Activated CD8-positive, alpha-beta T cell treated with anti-CD3 and anti-CD28 coated beads for 36 hours (primary cell): ENCODE measurements at regions of chr5 and their contacts with region 1.

Region 1: GRCh38 chr5:133364936-133365707 is 247.2 kb downstream of the FSTL4 start:
- DNase-seq: peak; percentile 57
- ATAC-seq: no peak
- H3K4me3 Mint-ChIP-seq: no peak overlapping the region
- H3K27ac Mint-ChIP-seq: no peak overlapping the region
- H3K4me1 Mint-ChIP-seq: no peaks in the 10 kb centered on the region
- H3K27me3 Mint-ChIP-seq: peaks cover 2% of the 10 kb centered on the region
- CTCF ChIP-seq: peak; percentile 71

Region 2: GRCh38 chr5:133240425-133241091 is 124.6 kb before region 1 on chr5:
- CTCF ChIA-PET with region 1: no interaction called
- POLR2A ChIA-PET with region 1: no interaction called
- intact Hi-C with region 1: no loop called
- DNase-seq: peak; percentile 72
- ATAC-seq: peak; percentile 83
- H3K4me3 Mint-ChIP-seq: no peak overlapping the region
- H3K27ac Mint-ChIP-seq: no peak overlapping the region
- H3K4me1 Mint-ChIP-seq: peaks cover 14% of the 10 kb centered on the region
- H3K27me3 Mint-ChIP-seq: no peaks in the 10 kb centered on the region
- CTCF ChIP-seq: no peak

Region 3: DNA sequence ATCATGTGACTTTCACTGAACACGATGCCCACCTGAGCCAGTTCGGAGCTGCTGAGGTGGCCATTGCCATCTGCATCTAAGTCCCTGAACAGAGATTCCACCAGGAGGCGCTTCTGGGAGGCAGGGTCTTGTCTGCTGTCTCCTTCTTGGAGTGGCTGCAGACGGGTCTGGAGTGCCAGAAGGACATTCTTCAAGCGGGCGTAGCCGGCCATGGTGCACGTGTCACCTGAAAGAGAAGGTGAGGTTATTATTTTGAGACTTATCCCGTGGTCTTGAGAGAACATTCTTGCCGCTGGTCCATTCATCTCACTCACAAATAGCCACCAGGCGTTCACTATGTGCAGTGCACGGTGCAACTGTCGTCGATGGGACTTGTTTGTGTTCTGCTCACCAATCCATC is 48.7 kb before region 1 on chr5:
- CTCF ChIA-PET with region 1: no interaction called
- POLR2A ChIA-PET with region 1: no interaction called
- intact Hi-C with region 1: no loop called
- DNase-seq: peak; percentile 28
- ATAC-seq: no peak
- H3K4me3 Mint-ChIP-seq: no peak overlapping the region
- H3K27ac Mint-ChIP-seq: no peak overlapping the region
- H3K4me1 Mint-ChIP-seq: peaks cover 3% of the 10 kb centered on the region
- H3K27me3 Mint-ChIP-seq: no peaks in the 10 kb centered on the region
- CTCF ChIP-seq: no peak

Region 4: GRCh38 chr5:133376986-133377385 is 11.9 kb after region 1 on chr5:
- CTCF ChIA-PET with region 1: interaction called, 10 read pairs
- POLR2A ChIA-PET with region 1: no interaction called
- intact Hi-C with region 1: no loop called
- DNase-seq: no peak
- ATAC-seq: no peak
- H3K4me3 Mint-ChIP-seq: no peak overlapping the region
- H3K27ac Mint-ChIP-seq: no peak overlapping the region
- H3K4me1 Mint-ChIP-seq: no peaks in the 10 kb centered on the region
- H3K27me3 Mint-ChIP-seq: peaks cover 15% of the 10 kb centered on the region
- CTCF ChIP-seq: no peak

Region 5: DNA sequence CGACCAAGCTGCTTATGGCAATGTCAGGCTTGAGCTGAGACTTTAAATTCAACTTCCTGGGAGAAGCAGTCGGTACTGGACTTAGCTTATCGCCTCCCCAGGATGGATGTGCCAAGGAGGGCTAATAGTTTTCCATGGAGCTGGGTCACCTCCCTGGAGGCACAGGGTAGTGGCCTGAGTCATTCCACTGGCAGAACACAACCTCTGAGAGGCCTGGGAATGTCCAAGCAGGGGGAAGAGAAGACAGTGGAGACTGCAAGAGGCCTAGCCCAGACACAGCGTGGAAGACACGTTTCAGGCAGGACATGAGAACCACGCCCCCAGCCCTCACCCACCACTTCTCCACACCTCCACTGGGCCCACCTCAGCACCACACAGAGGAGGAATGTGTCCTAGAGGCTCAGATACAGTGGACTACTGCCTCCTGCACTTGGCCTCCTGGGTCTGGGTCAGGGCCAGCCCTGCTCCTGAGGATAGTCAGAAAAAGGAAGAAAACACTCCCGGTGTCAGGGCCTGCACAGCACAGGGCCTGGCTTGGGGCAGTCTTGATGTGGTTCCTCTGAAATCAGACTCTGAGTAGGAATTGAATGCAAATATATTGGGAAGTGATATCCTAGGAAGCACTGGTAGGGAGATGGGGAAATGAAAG is 75.5 kb after region 1 on chr5:
- CTCF ChIA-PET with region 1: no interaction called
- POLR2A ChIA-PET with region 1: no interaction called
- intact Hi-C with region 1: no loop called
- DNase-seq: no peak
- ATAC-seq: no peak
- H3K4me3 Mint-ChIP-seq: no peak overlapping the region
- H3K27ac Mint-ChIP-seq: no peak overlapping the region
- H3K4me1 Mint-ChIP-seq: no peaks in the 10 kb centered on the region
- H3K27me3 Mint-ChIP-seq: peaks cover 6% of the 10 kb centered on the region
- CTCF ChIP-seq: no peak

Region 6: DNA sequence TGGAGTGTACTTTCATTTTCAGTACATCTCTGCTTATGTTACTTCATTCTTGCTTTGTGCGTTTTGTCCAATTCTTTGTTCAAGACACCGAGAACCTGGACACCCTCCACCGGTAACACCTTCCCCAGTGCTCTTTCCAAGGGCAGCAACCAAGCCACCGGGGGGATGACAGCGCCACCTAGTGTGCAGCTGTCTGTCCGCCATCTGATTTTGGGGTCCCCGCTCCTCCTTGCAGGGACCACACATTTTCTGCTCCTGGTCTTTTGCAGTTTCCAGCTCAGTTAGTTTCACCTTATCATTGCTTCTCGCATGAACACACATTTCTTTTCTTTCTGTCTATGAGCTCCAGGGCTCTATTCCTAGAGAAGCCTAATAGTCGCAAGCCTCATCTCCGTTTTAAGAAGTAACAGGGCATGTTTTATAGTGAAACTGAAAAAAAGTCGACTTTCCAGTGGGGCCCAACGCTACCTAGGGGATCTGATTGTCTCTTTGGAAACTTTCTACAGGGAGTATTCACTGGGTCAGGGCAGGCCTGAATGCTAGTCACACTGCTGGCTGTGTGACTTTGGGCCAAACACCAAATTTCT is 95.1 kb after region 1 on chr5:
- CTCF ChIA-PET with region 1: interaction called, 3 read pairs
- POLR2A ChIA-PET with region 1: no interaction called
- intact Hi-C with region 1: loop called (anchors 5 kb)
- DNase-seq: peak; percentile 65
- ATAC-seq: peak; percentile 56
- H3K4me3 Mint-ChIP-seq: no peak overlapping the region
- H3K27ac Mint-ChIP-seq: no peak overlapping the region
- H3K4me1 Mint-ChIP-seq: no peaks in the 10 kb centered on the region
- H3K27me3 Mint-ChIP-seq: no peaks in the 10 kb centered on the region
- CTCF ChIP-seq: peak; percentile 85